Right ventricle myocardium inferior (tissue), 1 donor: ENCODE measurements at regions of chr10 and their contacts with region 1.

Region 1: DNA sequence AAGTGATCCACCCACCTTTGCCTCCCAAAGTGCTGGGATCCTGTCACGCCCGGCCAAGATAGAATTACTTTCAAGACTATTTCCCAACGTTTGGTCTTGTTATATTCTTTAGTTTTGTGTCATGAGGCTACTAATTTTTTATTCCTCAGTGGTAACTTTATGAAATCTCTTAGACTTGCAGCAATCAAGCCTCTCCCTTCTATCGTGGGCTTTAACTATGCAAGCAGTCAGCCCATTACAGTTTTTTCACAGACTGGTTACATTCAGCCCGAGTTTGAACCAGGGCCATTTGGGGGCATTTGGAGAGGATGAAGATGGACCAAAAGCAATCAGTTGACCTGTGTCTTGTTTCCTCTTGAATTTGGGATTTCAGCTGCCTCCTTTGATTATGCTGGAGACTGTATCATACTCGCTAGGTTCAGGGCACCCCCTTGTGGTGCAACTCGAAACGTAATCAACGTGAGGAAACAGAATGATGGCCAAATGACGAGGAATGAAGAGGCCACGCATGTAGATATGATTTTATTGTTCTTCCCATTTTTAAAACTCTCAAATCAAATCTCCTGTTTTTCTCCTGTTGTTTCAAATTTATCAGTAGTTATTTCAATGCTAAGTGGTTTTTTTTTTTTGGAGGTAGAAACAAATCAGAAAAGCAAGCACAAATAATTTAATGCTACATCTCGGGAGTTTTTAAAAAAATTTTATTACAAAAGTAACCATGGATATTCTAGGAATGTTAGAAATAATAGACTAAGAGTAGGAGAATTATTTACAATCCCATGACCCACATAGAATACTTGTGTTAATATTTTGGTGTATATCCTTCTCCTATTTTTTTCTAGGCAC is 151.6 kb downstream of the KIAA1217 start:
- DNase-seq: peak; percentile 64
- ATAC-seq: peak; percentile 68

Region 2: GRCh38 chr10:23994479-23995046 is 365.9 kb before region 1 on chr10:
- intact Hi-C with region 1: loop called (anchors 2 kb)
- DNase-seq: no peak
- ATAC-seq: peak; percentile 80

Region 3: GRCh38 chr10:24209946-24210491 is 150.5 kb before region 1 on chr10:
- intact Hi-C with region 1: loop called (anchors 2 kb)
- DNase-seq: no peak
- ATAC-seq: peak; percentile 9

Region 4: DNA sequence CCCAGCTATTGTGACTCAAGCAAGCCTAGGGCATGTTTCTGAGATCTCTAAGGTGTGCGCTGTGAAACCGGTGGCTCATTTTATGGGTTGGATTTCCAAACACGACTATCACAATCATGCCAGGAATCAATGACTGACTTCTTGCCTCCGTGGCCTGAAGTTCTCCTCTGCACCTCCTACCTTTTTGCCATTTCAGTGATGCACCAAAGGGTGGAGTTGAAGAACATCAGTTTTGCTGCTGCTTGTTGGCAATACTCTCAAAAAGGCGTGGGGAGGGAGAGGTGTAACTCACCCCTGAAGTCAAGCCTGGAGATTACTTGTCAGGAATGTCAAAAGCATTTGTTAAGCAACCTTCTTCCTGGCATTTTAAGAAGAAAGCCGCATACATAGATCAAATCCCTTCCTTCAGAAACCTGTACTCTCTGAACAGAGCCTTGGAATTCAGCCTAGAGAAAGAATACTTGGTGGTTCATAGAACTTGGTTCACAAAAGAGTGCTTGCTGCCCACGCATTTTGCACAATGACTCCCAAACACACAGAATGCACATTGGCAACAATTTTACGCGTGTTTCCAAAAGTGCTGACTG is 110.6 kb before region 1 on chr10:
- intact Hi-C with region 1: loop called (anchors 5 kb)
- DNase-seq: no peak
- ATAC-seq: no peak

Region 5: GRCh38 chr10:24292304-24293293 is 67.9 kb before region 1 on chr10:
- intact Hi-C with region 1: no loop called
- DNase-seq: no peak
- ATAC-seq: peak; percentile 9

Region 6: GRCh38 chr10:24307696-24308485 is 52.6 kb before region 1 on chr10:
- intact Hi-C with region 1: loop called (anchors 2 kb)
- DNase-seq: no peak
- ATAC-seq: peak; percentile 75

Region 7: GRCh38 chr10:24503461-24504320 is 143.2 kb after region 1 on chr10:
- intact Hi-C with region 1: loop called (anchors 5 kb)
- DNase-seq: no peak
- ATAC-seq: no peak